Activated naive CD4-positive, alpha-beta T cell treated with anti-CD3 and anti-CD28 coated beads, Interleukin-2, amount 10 ng/mL, durations not matched to agents 7 days and 5 days (primary cell): ENCODE measurements at regions of chr12 and their contacts with region 1.

Region 1: GRCh38 chr12:11581179-11581755 is 68.2 kb upstream of the ETV6 start:
- DNase-seq: peak; percentile 77
- H3K4me3 Mint-ChIP-seq: no peak overlapping the region
- H3K27ac Mint-ChIP-seq: no peak overlapping the region
- H3K4me1 Mint-ChIP-seq: peaks cover 4% of the 10 kb centered on the region
- H3K27me3 Mint-ChIP-seq: peaks cover 25% of the 10 kb centered on the region

Region 2: GRCh38 chr12:11545484-11546330 is 35.6 kb before region 1 on chr12:
- CTCF ChIA-PET with region 1: interaction called, 10 read pairs
- DNase-seq: peak; percentile 77
- H3K4me3 Mint-ChIP-seq: peak overlapping the region; percentile 61
- H3K27ac Mint-ChIP-seq: peak overlapping the region; percentile 96
- H3K4me1 Mint-ChIP-seq: peaks cover 61% of the 10 kb centered on the region
- H3K27me3 Mint-ChIP-seq: no peaks in the 10 kb centered on the region

Region 3: DNA sequence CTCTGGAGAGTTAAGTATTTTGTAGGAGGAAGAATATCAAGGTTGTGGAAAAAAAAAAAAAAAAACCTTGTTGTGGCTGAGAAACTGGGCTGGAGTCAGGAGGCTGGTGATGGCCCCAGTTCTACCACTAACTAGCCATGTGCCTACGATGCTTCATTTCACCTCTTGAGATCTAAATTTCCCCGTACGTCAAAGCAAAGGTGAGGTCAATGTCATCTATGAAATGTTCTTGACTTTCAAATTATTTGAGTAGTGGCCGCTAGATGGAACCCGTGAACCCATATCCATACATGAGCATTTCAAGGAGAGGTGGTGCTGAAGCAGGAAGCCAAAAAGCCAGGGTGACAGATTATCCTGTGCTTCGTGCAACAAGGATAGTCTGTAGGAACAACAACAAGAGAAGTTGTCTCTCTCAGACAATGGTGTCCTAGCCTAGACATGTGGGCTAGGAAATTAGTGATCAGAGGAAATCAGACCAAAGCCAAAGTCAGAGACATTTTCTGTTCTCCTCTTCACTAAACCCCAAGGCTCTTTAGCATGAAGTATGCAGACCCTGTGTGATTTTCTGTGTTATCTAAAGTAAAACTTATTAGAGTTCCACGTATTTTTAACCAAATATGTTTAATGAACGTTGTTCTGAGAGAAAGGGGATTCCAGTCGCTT is 27.3 kb before region 1 on chr12:
- CTCF ChIA-PET with region 1: interaction called, 11 read pairs
- DNase-seq: peak; percentile 72
- H3K4me3 Mint-ChIP-seq: no peak overlapping the region
- H3K27ac Mint-ChIP-seq: no peak overlapping the region
- H3K4me1 Mint-ChIP-seq: peaks cover 26% of the 10 kb centered on the region
- H3K27me3 Mint-ChIP-seq: peaks cover 6% of the 10 kb centered on the region

Region 4: GRCh38 chr12:12008931-12009611 is 427.8 kb after region 1 on chr12:
- CTCF ChIA-PET with region 1: interaction called, 25 read pairs
- DNase-seq: peak; percentile 68
- H3K4me3 Mint-ChIP-seq: peak overlapping the region; percentile 68
- H3K27ac Mint-ChIP-seq: peak overlapping the region; percentile 98
- H3K4me1 Mint-ChIP-seq: peaks cover 86% of the 10 kb centered on the region
- H3K27me3 Mint-ChIP-seq: no peaks in the 10 kb centered on the region

Region 5: DNA sequence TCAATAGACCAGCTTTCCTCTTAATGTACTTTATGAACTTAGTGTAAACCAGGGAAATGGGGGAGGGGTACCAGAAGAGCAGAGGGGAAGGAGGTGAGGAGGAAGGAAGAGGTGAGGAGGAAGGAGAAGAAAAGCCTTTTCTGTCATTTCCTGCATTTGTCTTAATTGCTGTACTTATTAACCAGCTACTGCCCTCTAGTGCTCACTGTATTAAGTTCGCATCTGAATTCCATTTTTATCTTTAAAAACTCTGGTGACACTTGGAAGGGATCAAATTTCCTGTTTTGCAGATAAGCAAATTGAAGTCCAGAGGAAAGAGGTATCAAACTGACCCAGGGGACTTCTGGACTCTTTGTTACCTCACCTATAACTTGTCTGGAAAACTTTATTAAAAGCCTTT is 746.5 kb after region 1 on chr12:
- CTCF ChIA-PET with region 1: interaction called, 17 read pairs
- DNase-seq: peak; percentile 22
- H3K4me3 Mint-ChIP-seq: no peak overlapping the region
- H3K27ac Mint-ChIP-seq: no peak overlapping the region
- H3K4me1 Mint-ChIP-seq: peaks cover 8% of the 10 kb centered on the region
- H3K27me3 Mint-ChIP-seq: peaks cover 17% of the 10 kb centered on the region

Region 6: GRCh38 chr12:12334367-12335040 is 753.2 kb after region 1 on chr12:
- CTCF ChIA-PET with region 1: interaction called, 10 read pairs
- DNase-seq: peak; percentile 70
- H3K4me3 Mint-ChIP-seq: no peak overlapping the region
- H3K27ac Mint-ChIP-seq: no peak overlapping the region
- H3K4me1 Mint-ChIP-seq: peaks cover 31% of the 10 kb centered on the region
- H3K27me3 Mint-ChIP-seq: peaks cover 21% of the 10 kb centered on the region